IMR-90 (cell line): ENCODE measurements at regions of chr5 and their contacts with region 1.

Region 1: GRCh38 chr5:154791535-154791934 is 36.4 kb downstream of the LARP1 start:
- DNase-seq: no peak
- ATAC-seq: no peak
- H3K4me3 ChIP-seq: no peak overlapping the region
- H3K27ac ChIP-seq: no peak overlapping the region
- H3K4me1 ChIP-seq: peaks cover 28% of the 10 kb centered on the region
- H3K27me3 ChIP-seq: no peaks in the 10 kb centered on the region
- CTCF ChIP-seq: no peak
- POLR2A ChIP-seq: no peak
- RAD21 ChIP-seq: no peak

Region 2: GRCh38 chr5:154771383-154771901 is 20.1 kb before region 1 on chr5:
- CTCF ChIA-PET with region 1: no interaction called
- POLR2A ChIA-PET with region 1: no interaction called
- dilution Hi-C with region 1: no loop called
- in situ Hi-C with region 1: no loop called
- intact Hi-C with region 1: no loop called
- DNase-seq: peak; percentile 92
- ATAC-seq: peak; percentile 94
- H3K4me3 ChIP-seq: no peak overlapping the region
- H3K27ac ChIP-seq: peak overlapping the region; percentile 39; the same call in 1 of the 2 replicates
- H3K4me1 ChIP-seq: peaks cover 25% of the 10 kb centered on the region
- H3K27me3 ChIP-seq: no peaks in the 10 kb centered on the region
- CTCF ChIP-seq: no peak
- POLR2A ChIP-seq: no peak
- RAD21 ChIP-seq: peak; percentile 32

Region 3: GRCh38 chr5:154834053-154834452 is 42.5 kb after region 1 on chr5:
- CTCF ChIA-PET with region 1: no interaction called
- POLR2A ChIA-PET with region 1: no interaction called
- dilution Hi-C with region 1: no loop called
- in situ Hi-C with region 1: no loop called
- intact Hi-C with region 1: loop called (anchors 1 kb)
- DNase-seq: no peak
- ATAC-seq: no peak
- H3K4me3 ChIP-seq: no peak overlapping the region
- H3K27ac ChIP-seq: no peak overlapping the region
- H3K4me1 ChIP-seq: peaks cover 2% of the 10 kb centered on the region
- H3K27me3 ChIP-seq: no peaks in the 10 kb centered on the region
- CTCF ChIP-seq: no peak
- POLR2A ChIP-seq: no peak
- RAD21 ChIP-seq: no peak